OCI-LY7 (cell line): ENCODE measurements at regions of chr10 and their contacts with region 1.

Region 1: DNA sequence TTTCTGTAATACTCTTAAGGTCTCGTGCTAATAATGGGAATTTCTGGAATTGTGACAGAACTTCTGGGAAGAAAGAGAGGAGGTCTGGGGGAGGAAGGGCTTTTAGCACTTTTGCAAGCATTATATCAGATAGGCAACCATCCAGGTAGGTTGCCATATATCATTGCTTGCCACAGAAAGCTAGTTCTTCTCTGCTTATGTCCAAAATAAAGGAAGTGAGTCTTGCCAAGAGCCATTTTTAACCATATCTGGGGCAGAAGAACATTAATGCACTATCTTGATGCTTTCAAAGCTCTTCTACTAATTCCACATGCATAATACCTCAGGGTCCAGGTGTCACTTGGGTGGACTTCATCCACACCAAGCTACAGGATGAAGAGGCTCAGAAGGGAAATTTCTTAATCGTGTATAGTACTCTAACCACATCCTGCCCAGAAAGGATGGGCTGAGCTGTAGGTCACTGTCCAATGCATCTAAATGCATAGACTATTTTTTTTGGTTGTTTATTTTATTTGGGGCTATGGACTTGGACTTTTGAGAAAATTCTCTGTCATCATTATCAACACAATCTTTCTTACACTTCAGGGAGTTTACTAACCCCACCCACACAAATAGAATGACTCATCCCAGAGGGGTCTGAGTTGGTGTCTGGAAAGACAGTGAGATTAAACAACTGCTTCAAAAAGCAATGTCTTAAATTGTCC is 68.9 kb upstream of the ADO start:
- DNase-seq: peak; percentile 83
- H3K4me3 ChIP-seq: no peak overlapping the region
- H3K27ac ChIP-seq: peak overlapping the region; percentile 26
- H3K4me1 ChIP-seq: peaks cover 33% of the 10 kb centered on the region
- CTCF ChIP-seq: no peak

Region 2: DNA sequence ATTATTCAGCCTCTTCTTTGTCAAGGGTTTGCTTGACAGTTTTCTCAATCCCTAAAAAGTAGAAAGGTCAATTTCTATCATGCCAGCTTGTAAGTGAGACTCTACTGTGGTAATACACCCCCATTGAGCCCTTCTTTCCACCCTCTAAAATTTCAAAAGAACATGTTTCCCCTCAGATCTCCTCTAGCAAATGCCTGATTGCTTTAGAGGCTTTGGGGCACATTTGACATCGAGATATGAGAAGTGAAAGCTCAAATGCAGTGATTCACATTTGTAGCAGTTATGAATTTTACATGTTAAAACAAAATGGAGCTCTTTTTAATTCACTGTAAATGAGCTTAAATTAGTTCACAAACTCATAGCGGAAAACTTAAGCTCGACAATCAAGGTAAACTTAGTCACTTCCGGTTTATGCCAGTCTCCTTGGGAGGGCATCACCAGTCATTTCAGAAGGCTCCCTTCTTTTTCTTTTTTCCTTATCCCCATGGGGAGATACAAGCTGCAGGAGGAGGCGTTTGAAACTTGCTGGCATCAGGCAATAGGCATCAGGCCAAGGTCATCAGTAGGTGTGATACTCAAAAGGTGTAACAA is 13.6 kb after region 1 on chr10:
- CTCF ChIA-PET with region 1: no interaction called
- POLR2A ChIA-PET with region 1: interaction called, 11 read pairs
- intact Hi-C with region 1: no loop called
- DNase-seq: peak; percentile 21
- H3K4me3 ChIP-seq: no peak overlapping the region
- H3K27ac ChIP-seq: no peak overlapping the region
- H3K4me1 ChIP-seq: peaks cover 12% of the 10 kb centered on the region
- CTCF ChIP-seq: no peak

Region 3: DNA sequence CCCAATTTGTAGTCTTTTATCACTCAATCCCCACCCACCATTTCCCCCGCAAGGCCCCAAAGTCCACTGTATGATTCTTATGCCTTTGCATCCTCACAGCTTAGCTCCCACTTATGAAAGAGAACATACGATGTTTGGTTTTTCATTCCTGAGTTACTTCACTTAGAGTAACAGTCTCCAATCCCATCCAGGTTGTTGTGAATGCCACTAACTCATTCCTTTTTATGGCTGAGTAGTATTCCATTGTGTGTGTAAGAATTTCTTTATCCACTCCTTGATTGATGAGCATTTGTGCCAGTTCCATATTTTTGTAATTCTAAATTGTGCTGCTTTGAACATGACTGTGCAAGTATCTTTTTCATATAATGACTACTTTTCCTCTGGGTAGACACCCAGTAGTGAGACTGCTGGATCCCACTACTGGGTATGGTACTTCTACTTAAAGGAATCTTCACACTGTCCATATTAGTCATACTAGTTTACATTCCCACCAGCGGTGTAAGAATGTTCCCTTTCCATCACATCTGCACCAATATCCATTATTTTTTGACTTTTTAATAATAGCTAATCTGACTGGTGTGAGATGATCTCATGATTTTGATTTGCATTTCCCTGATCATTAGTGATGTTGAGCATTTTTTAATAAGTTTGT is 577.6 kb after region 1 on chr10:
- CTCF ChIA-PET with region 1: no interaction called
- POLR2A ChIA-PET with region 1: no interaction called
- intact Hi-C with region 1: no loop called
- DNase-seq: no peak
- H3K4me3 ChIP-seq: no peak overlapping the region
- H3K27ac ChIP-seq: no peak overlapping the region
- H3K4me1 ChIP-seq: no peaks in the 10 kb centered on the region
- CTCF ChIP-seq: no peak